T-cell (primary cell): ENCODE measurements at regions of chr5 and their contacts with region 1.

Region 1: DNA sequence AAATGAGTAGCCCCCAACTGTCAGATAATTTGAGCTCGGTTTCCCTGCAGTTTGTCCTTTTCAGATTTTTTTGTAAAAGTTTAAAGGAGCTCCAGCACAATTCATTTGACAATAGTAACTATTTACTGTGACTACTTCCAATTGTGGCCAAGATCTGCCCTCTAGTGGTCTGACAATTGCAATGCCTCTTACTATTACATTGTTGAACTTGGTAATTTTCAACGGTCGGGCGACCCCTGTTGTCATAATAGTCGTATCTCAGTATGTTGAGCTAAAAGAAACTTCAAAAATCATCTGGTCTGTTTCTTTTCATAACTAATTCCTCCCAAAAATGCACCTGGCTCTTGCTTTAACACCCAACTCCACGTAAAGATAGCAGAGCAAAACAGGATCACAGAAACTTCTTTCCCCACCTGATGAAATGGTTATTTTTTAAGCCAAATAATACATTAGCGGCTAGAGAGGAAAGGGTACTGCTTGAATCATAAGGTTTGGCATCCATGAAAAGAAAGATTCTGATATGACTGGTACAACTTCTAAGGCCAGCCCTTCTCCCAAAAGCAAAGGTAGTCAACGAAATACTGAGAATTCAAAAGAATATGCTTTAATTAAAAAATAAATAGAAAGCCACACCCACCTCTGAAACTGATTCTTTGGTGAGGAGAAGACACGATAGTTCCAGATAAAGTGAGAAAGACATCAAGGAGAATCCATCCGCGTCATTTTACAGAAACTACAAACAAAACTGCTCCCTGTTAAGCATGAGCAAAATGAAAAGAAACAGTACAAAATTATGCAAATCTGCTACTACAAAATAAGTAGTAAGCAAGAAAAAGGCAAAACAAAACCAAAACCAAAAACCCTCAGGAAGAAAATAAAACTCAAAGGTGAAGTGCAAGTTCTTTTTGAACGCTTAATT is 76.9 kb upstream of the HTR4 start:
- DNase-seq: peak; percentile 2 to 84 (median 59)
- ATAC-seq: peak; percentile 86 to 96 (median 90)
- H3K4me3 ChIP-seq: peak overlapping the region in 1 of 2 donors; percentile 8
- H3K4me3 Mint-ChIP-seq: peak overlapping the region; percentile 33 to 78 (median 59)
- H3K27ac ChIP-seq: no peak overlapping the region
- H3K27ac Mint-ChIP-seq: peak overlapping the region; percentile 70 to 77
- H3K4me1 ChIP-seq: no peaks in the 10 kb centered on the region
- H3K4me1 Mint-ChIP-seq: peaks cover 0 to 11% (median 5%) of the 10 kb centered on the region in 3 donors
- H3K27me3 ChIP-seq: no peaks in the 10 kb centered on the region
- H3K27me3 Mint-ChIP-seq: peaks cover 3 to 4% of the 10 kb centered on the region in 2 donors

Region 2: GRCh38 chr5:147290261-147290660 is 1440.9 kb before region 1 on chr5:
- CTCF ChIA-PET with region 1: no interaction called
- POLR2A ChIA-PET with region 1: no interaction called
- DNase-seq: no peak
- ATAC-seq: no peak
- H3K4me3 ChIP-seq: no peak overlapping the region
- H3K4me3 Mint-ChIP-seq: no peak overlapping the region
- H3K27ac ChIP-seq: no peak overlapping the region
- H3K27ac Mint-ChIP-seq: no peak overlapping the region
- H3K4me1 ChIP-seq: no peaks in the 10 kb centered on the region
- H3K4me1 Mint-ChIP-seq: no peaks in the 10 kb centered on the region
- H3K27me3 ChIP-seq: no peaks in the 10 kb centered on the region
- H3K27me3 Mint-ChIP-seq: no peaks in the 10 kb centered on the region

Region 3: GRCh38 chr5:148179234-148179824 is 551.9 kb before region 1 on chr5:
- CTCF ChIA-PET with region 1: interaction called, 9 to 12 read pairs
- POLR2A ChIA-PET with region 1: no interaction called
- DNase-seq: peak in 4 of 35 experiments; percentile 2 to 67 (median 4)
- ATAC-seq: no peak
- H3K4me3 ChIP-seq: no peak overlapping the region
- H3K4me3 Mint-ChIP-seq: no peak overlapping the region
- H3K27ac ChIP-seq: no peak overlapping the region
- H3K27ac Mint-ChIP-seq: no peak overlapping the region
- H3K4me1 ChIP-seq: no peaks in the 10 kb centered on the region
- H3K4me1 Mint-ChIP-seq: no peaks in the 10 kb centered on the region
- H3K27me3 ChIP-seq: no peaks in the 10 kb centered on the region
- H3K27me3 Mint-ChIP-seq: peaks cover 5 to 26% of the 10 kb centered on the region in 2 donors

Region 4: GRCh38 chr5:148957591-148958202 is 226.5 kb after region 1 on chr5:
- CTCF ChIA-PET with region 1: interaction called, 7 to 14 read pairs
- POLR2A ChIA-PET with region 1: no interaction called
- DNase-seq: peak in 29 of 35 experiments; percentile 9 to 67 (median 32)
- ATAC-seq: peak in 3 of 4 experiments; percentile 30 to 59 (median 44)
- H3K4me3 ChIP-seq: no peak overlapping the region
- H3K4me3 Mint-ChIP-seq: no peak overlapping the region
- H3K27ac ChIP-seq: no peak overlapping the region
- H3K27ac Mint-ChIP-seq: no peak overlapping the region
- H3K4me1 ChIP-seq: peaks cover 0 to 10% of the 10 kb centered on the region in 2 experiments
- H3K4me1 Mint-ChIP-seq: no peaks in the 10 kb centered on the region
- H3K27me3 ChIP-seq: peaks cover 0 to 3% of the 10 kb centered on the region in 2 experiments
- H3K27me3 Mint-ChIP-seq: peaks cover 3 to 8% of the 10 kb centered on the region in 2 donors

Region 5: GRCh38 chr5:149035372-149035790 is 304.2 kb after region 1 on chr5:
- CTCF ChIA-PET with region 1: interaction called, 32 to 138 read pairs
- POLR2A ChIA-PET with region 1: no interaction called
- DNase-seq: peak; percentile 14 to 76 (median 56)
- ATAC-seq: peak; percentile 56 to 81 (median 64)
- H3K4me3 ChIP-seq: no peak overlapping the region
- H3K4me3 Mint-ChIP-seq: no peak overlapping the region
- H3K27ac ChIP-seq: no peak overlapping the region
- H3K27ac Mint-ChIP-seq: no peak overlapping the region
- H3K4me1 ChIP-seq: no peaks in the 10 kb centered on the region
- H3K4me1 Mint-ChIP-seq: peaks cover 13 to 27% (median 17%) of the 10 kb centered on the region in 3 donors
- H3K27me3 ChIP-seq: peaks cover 0 to 9% of the 10 kb centered on the region in 2 experiments
- H3K27me3 Mint-ChIP-seq: no peaks in the 10 kb centered on the region

Region 6: DNA sequence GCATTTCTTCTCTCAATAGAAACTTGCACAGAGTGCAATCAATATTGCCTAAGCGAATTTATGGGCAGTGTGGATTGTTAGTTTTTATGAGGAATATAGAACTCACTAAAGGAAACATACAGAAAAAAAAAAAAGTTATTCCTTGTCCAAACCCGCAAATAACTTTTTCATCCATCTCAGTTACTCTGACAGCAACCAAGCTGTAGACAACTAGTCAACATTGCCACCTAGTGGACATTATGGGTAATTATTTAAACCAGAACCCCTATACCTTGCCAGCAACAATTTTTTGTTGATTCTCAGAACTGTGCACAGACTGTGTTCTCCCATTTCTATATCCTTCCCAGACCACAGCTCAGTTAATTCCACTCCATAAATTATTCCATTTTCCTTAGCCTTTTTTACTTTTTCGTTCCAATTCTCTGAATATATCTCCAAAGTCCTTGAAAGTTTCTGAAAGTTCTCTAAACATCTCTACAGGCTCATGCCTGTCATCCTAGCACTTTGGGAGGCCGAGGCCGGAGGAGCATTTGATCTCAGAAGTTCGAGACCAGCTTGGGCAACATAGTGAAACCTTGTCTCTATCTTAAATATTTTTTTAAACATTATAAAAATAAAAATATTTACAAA is 537.8 kb after region 1 on chr5:
- CTCF ChIA-PET with region 1: interaction called in 1 of 2 experiments, 10 read pairs
- POLR2A ChIA-PET with region 1: no interaction called
- DNase-seq: peak in 2 of 35 experiments; percentile 6 to 66
- ATAC-seq: peak in 2 of 4 experiments; percentile 37 to 43
- H3K4me3 ChIP-seq: no peak overlapping the region
- H3K4me3 Mint-ChIP-seq: no peak overlapping the region
- H3K27ac ChIP-seq: no peak overlapping the region
- H3K27ac Mint-ChIP-seq: peak overlapping the region in 1 of 2 donors; percentile 7
- H3K4me1 ChIP-seq: peaks cover 5 to 12% of the 10 kb centered on the region in 2 experiments
- H3K4me1 Mint-ChIP-seq: peaks cover 15 to 26% (median 17%) of the 10 kb centered on the region in 3 donors
- H3K27me3 ChIP-seq: peaks cover 2 to 48% of the 10 kb centered on the region in 2 experiments
- H3K27me3 Mint-ChIP-seq: peaks cover 24 to 33% of the 10 kb centered on the region in 2 donors